ENCODE measurements at regions of chr17 and their contacts with region 1.

Region 1: GRCh38 chr17:61451538-61452300 is 503 bp upstream of the TBX4 start:
- DNase-seq: no peak
- H3K4me3 ChIP-seq: peak overlapping the region; percentile 11 to 34
- H3K27ac ChIP-seq: peak overlapping the region in 1 of 2 donors; percentile 64
- H3K4me1 ChIP-seq: no peaks in the 10 kb centered on the region
- H3K27me3 ChIP-seq: peaks cover 27% of the 10 kb centered on the region
- CTCF ChIP-seq: no peak
- POLR2A ChIP-seq: no peak

Region 2: GRCh38 chr17:61490540-61491412 is 39.1 kb after region 1 on chr17:
- intact Hi-C with region 1: loop called (anchors 5 kb)
- DNase-seq: no peak
- H3K4me3 ChIP-seq: no peak overlapping the region
- H3K27ac ChIP-seq: no peak overlapping the region
- H3K4me1 ChIP-seq: no peaks in the 10 kb centered on the region
- H3K27me3 ChIP-seq: no peaks in the 10 kb centered on the region
- CTCF ChIP-seq: no peak
- POLR2A ChIP-seq: no peak

Region 3: GRCh38 chr17:61551255-61551742 is 99.6 kb after region 1 on chr17:
- intact Hi-C with region 1: no loop called
- DNase-seq: no peak
- H3K4me3 ChIP-seq: no peak overlapping the region
- H3K27ac ChIP-seq: no peak overlapping the region
- H3K4me1 ChIP-seq: no peaks in the 10 kb centered on the region
- H3K27me3 ChIP-seq: no peaks in the 10 kb centered on the region
- CTCF ChIP-seq: peak in 3 of 4 experiments; percentile 40 to 79 (median 73)
- POLR2A ChIP-seq: no peak

Measured in prostate gland (tissue), 2 donors.